ENCODE measurements at regions of chr4 and their contacts with region 1.

Region 1: GRCh38 chr4:93791570-93792195 is 36.9 kb upstream of the ATOH1 start:
- DNase-seq: peak; percentile 55
- ATAC-seq: peak; percentile 86
- H3K4me3 ChIP-seq: no peak overlapping the region
- H3K27ac ChIP-seq: no peak overlapping the region
- H3K4me1 ChIP-seq: no peaks in the 10 kb centered on the region
- H3K27me3 ChIP-seq: no peaks in the 10 kb centered on the region
- CTCF ChIP-seq: peak; percentile 78 to 88 (median 80)
- POLR2A ChIP-seq: no peak
- RAD21 ChIP-seq: peak; percentile 87

Region 2: DNA sequence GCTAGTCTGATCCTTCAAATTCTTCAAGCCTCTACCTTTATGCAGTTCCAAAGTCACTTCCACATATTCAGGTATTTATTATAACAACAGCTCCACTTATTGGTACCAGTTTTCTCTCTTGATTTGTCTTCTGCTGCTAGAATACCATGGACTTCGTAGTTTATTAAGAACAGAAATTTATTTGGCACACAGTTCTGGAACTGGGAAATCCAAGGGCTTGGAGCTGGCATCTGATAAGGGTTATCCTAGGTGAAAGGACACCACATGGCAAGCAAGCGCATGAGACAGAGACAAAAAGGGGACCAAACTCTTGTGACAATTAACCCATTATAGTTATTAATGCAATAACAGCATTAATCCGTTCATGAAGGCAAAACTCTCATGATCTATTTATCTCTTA is 563.7 kb before region 1 on chr4:
- CTCF ChIA-PET with region 1: no interaction called
- POLR2A ChIA-PET with region 1: no interaction called
- RAD21 ChIA-PET with region 1: no interaction called
- intact Hi-C with region 1: no loop called
- DNase-seq: no peak
- ATAC-seq: no peak
- H3K4me3 ChIP-seq: no peak overlapping the region
- H3K27ac ChIP-seq: no peak overlapping the region
- H3K4me1 ChIP-seq: no peaks in the 10 kb centered on the region
- H3K27me3 ChIP-seq: no peaks in the 10 kb centered on the region
- CTCF ChIP-seq: no peak
- POLR2A ChIP-seq: no peak
- RAD21 ChIP-seq: no peak

Region 3: GRCh38 chr4:93710101-93710846 is 81.4 kb before region 1 on chr4:
- CTCF ChIA-PET with region 1: no interaction called
- POLR2A ChIA-PET with region 1: no interaction called
- RAD21 ChIA-PET with region 1: no interaction called
- intact Hi-C with region 1: loop called (anchors 1 kb)
- DNase-seq: peak; percentile 35
- ATAC-seq: peak; percentile 89
- H3K4me3 ChIP-seq: no peak overlapping the region
- H3K27ac ChIP-seq: no peak overlapping the region
- H3K4me1 ChIP-seq: no peaks in the 10 kb centered on the region
- H3K27me3 ChIP-seq: no peaks in the 10 kb centered on the region
- CTCF ChIP-seq: peak; percentile 31 to 65 (median 38); a peak in 4 of 6 replicates
- POLR2A ChIP-seq: no peak
- RAD21 ChIP-seq: peak; percentile 72

Region 4: GRCh38 chr4:94256828-94257227 is 465.1 kb after region 1 on chr4:
- CTCF ChIA-PET with region 1: no interaction called
- POLR2A ChIA-PET with region 1: no interaction called
- RAD21 ChIA-PET with region 1: no interaction called
- intact Hi-C with region 1: loop called (anchors 1 kb)
- DNase-seq: no peak
- ATAC-seq: no peak
- H3K4me3 ChIP-seq: no peak overlapping the region
- H3K27ac ChIP-seq: no peak overlapping the region
- H3K4me1 ChIP-seq: no peaks in the 10 kb centered on the region
- H3K27me3 ChIP-seq: no peaks in the 10 kb centered on the region
- CTCF ChIP-seq: peak in 2 of 3 experiments; percentile 26 to 47; a peak in 3 of 6 replicates
- POLR2A ChIP-seq: no peak
- RAD21 ChIP-seq: peak; percentile 42; the same call in 1 of the 2 replicates

Region 5: DNA sequence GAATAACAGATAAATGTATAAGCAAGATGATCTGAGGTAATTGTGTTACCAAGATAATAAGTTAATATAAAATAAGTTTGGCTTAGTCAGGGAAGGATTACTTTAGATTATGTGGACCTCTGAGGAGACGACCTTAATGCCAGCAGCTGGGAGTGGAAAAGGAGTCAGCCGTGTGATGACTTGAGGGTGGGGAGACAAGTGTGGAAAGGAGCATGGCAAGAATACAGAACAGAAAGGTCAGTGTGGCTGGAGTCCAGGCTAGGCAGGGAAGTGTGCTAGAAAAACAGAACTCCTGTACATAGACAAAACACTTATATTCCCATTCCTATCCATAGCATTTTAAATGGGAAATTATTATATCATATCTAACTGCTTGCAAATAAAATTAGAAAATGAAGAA is 798.8 kb after region 1 on chr4:
- CTCF ChIA-PET with region 1: no interaction called
- POLR2A ChIA-PET with region 1: no interaction called
- RAD21 ChIA-PET with region 1: no interaction called
- intact Hi-C with region 1: loop called (anchors 5 kb)
- DNase-seq: no peak
- ATAC-seq: no peak
- H3K4me3 ChIP-seq: no peak overlapping the region
- H3K27ac ChIP-seq: no peak overlapping the region
- H3K4me1 ChIP-seq: peaks cover 0 to 2% of the 10 kb centered on the region in 2 experiments; a peak in 2 of 4 replicates
- H3K27me3 ChIP-seq: no peaks in the 10 kb centered on the region
- CTCF ChIP-seq: no peak
- POLR2A ChIP-seq: no peak
- RAD21 ChIP-seq: no peak

Region 6: GRCh38 chr4:95095348-95095974 is 1303.8 kb after region 1 on chr4:
- CTCF ChIA-PET with region 1: no interaction called
- POLR2A ChIA-PET with region 1: no interaction called
- RAD21 ChIA-PET with region 1: no interaction called
- intact Hi-C with region 1: loop called (anchors 10 kb)
- DNase-seq: peak; percentile 7
- ATAC-seq: peak; percentile 74
- H3K4me3 ChIP-seq: no peak overlapping the region
- H3K27ac ChIP-seq: no peak overlapping the region
- H3K4me1 ChIP-seq: no peaks in the 10 kb centered on the region
- H3K27me3 ChIP-seq: no peaks in the 10 kb centered on the region
- CTCF ChIP-seq: peak; percentile 59 to 73 (median 68); a peak in 5 of 6 replicates
- POLR2A ChIP-seq: no peak
- RAD21 ChIP-seq: peak; percentile 76

Measured in HCT116 (cell line).